WTC11 (cell line): ENCODE measurements at regions of chr1 and their contacts with region 1.

Region 1: DNA sequence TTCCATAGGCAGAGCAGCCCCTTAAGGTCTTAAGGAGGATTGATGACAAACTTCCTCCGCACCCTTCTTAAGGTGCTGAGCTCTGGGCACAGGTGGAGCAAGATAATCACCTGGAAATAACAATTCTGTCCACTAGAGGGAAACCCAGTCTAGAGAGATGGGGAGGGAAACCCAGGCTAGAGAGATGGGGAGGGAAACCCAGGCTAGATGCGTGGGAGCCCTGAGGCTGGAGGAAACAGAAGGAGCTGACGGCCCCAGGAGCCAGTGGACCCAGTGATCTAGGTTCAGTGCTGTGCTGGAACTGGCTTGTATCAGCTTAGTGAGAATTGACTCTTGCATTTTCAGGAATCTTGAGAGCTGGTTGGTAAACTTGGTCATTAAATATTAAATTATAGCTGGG is 17.8 kb upstream of the MYCL start:
- DNase-seq: peak; percentile 61
- ATAC-seq: peak; percentile 78
- H3K4me3 Mint-ChIP-seq: no peak overlapping the region
- H3K27ac Mint-ChIP-seq: no peak overlapping the region
- H3K4me1 Mint-ChIP-seq: peaks cover 30% of the 10 kb centered on the region
- H3K27me3 Mint-ChIP-seq: peaks cover 6% of the 10 kb centered on the region; the same call in 1 of the 2 replicates
- CTCF ChIP-seq: peak; percentile 54; the same call in 1 of the 2 replicates

Region 2: DNA sequence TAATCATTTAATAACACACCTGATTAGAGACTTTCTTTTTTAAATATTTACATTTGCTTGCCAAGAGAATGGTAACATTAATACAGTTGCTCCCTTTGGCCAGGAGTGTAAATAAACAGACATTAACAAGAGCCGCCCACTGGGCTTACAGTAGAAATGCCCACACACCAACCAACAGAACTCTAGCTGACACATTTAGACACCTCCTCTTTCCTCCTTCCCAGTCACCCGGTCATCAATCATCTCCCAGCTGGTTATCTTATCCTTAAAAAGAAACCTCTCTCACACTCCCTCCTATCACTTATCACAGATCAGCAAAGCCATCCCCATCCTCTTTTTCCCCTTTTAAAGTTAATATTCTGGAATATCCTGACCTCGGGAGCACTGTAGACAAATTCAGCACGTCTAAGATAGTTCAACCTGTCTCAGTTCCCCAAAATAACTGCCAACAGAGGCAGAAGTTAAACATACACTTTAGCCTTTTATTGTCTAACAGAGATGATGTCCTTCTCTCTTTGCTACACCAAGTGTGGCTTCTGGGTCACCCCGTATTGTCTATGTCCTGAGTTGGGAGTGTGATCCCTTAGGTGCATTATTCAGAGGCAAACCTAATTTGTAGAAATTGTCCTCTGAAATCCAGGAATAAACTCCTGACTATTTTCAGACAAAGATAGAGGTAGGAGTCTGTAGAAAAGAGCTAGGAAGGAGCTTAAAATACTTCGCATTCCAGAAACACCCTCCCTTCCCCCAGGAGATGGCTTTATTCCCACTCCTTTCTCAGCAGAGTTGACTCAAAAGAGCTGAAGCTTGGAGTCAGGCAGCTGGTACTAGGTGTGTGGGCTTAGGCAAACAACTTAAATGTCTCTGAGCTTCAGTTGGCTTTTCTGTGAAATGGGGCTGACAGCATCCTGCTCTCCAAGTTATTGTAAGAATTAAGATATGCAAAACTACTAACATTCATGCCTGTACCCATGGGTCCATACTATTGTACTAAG is 26.6 kb before region 1 on chr1:
- CTCF ChIA-PET with region 1: interaction called, 28 read pairs
- POLR2A ChIA-PET with region 1: no interaction called
- DNase-seq: peak; percentile 23
- ATAC-seq: peak; percentile 86
- H3K4me3 Mint-ChIP-seq: peak overlapping the region; percentile 40
- H3K27ac Mint-ChIP-seq: peak overlapping the region; percentile 96
- H3K4me1 Mint-ChIP-seq: peaks cover 59% of the 10 kb centered on the region
- H3K27me3 Mint-ChIP-seq: peaks cover 3% of the 10 kb centered on the region
- CTCF ChIP-seq: no peak

Region 3: DNA sequence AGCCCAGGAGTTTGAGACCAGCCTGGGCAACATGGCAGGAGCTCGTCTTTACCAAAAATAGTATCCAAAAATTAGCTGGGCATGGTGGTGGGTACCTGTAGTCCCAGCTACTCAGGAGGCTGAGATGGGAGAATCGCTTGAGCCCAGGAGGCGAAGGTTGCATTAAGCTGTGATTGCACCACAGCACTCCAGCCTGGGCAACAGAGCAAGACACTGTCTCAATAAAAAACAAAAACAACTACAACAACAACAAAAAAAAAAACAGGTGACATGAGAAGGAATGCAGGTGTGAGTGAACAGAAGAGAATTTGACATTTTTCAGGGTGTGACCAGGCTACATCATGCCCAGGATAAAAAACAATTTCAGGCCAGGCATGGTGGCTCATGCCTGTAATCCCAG is 13.5 kb after region 1 on chr1:
- CTCF ChIA-PET with region 1: interaction called, 23 read pairs
- POLR2A ChIA-PET with region 1: no interaction called
- DNase-seq: no peak
- ATAC-seq: no peak
- H3K4me3 Mint-ChIP-seq: no peak overlapping the region
- H3K27ac Mint-ChIP-seq: no peak overlapping the region
- H3K4me1 Mint-ChIP-seq: no peaks in the 10 kb centered on the region
- H3K27me3 Mint-ChIP-seq: no peaks in the 10 kb centered on the region
- CTCF ChIP-seq: no peak

Region 4: DNA sequence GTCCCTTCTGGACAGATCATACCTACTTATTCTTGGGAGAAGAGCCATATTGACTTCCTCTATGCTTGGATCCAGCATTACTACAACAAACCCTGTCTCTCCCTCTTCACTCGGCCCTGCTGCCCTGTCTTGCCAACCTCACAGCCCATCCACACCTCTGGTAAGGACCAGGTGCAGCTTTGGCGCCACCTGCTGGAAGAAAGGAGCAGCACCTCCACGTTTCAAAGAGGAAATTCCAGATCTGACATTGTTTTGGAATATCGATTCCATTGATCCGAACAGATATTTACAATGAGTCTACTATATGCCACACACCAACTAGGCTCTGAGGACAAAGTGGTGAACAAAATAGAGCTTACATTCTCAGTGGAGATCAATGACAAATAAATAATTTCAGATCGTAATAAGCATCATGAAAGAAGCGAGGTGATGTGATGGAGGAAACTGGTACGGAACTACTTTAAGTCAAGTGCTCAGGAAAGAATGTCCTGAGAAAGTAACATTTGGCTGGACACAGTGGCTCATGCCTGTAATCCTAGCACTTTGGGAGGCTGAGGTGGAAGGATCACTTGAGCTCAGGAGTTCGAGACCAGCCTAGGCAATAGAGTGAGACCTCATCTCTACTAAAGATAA is 54.1 kb after region 1 on chr1:
- CTCF ChIA-PET with region 1: interaction called, 144 read pairs
- POLR2A ChIA-PET with region 1: interaction called, 3 read pairs
- DNase-seq: peak; percentile 82
- ATAC-seq: peak; percentile 83
- H3K4me3 Mint-ChIP-seq: no peak overlapping the region
- H3K27ac Mint-ChIP-seq: peak overlapping the region; percentile 12
- H3K4me1 Mint-ChIP-seq: peaks cover 15% of the 10 kb centered on the region
- H3K27me3 Mint-ChIP-seq: no peaks in the 10 kb centered on the region; the same call in 1 of the 2 replicates
- CTCF ChIP-seq: peak; percentile 97

Region 5: DNA sequence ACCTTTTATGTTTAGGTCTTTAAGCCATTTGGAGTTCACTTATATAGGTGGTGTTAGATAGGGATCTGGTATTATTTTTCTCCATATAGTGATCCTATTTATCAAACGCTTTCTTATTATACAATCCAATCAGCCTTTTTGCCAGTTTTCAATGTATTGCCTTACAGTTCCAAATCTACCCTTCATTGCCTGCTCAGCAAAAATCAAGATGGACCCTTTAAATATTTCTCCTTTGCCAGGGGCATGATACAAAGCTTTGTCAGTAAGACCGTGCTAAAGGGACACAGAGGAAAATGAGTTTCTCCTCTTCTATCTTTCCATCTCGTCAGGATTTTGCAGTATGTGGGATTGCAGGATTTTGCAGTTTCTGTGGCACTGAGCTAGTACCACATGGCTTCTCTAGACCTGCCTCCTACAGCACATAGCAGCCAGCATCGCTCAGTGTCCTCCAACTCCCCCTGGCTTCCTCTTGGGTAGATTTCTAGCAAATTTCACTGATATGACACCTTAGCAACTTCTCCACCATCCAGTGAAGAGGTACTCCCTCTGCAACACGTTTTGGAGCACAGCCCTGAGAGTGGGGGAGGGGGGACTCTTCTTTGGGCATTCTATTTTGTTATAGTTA is 98.5 kb after region 1 on chr1:
- CTCF ChIA-PET with region 1: interaction called, 16 read pairs
- POLR2A ChIA-PET with region 1: no interaction called
- DNase-seq: no peak
- ATAC-seq: peak; percentile 85
- H3K4me3 Mint-ChIP-seq: no peak overlapping the region
- H3K27ac Mint-ChIP-seq: no peak overlapping the region
- H3K4me1 Mint-ChIP-seq: no peaks in the 10 kb centered on the region
- H3K27me3 Mint-ChIP-seq: no peaks in the 10 kb centered on the region
- CTCF ChIP-seq: no peak

Region 6: GRCh38 chr1:40040511-40041465 is 121.2 kb after region 1 on chr1 and contains the start of gene CAP1:
- CTCF ChIA-PET with region 1: interaction called, 15 read pairs
- POLR2A ChIA-PET with region 1: interaction called, 5 read pairs
- DNase-seq: peak; percentile 100
- ATAC-seq: peak; percentile 91
- H3K4me3 Mint-ChIP-seq: peak within 1 kb of the TSS; percentile 95
- H3K27ac Mint-ChIP-seq: peak within 1 kb of the TSS; percentile 97
- H3K4me1 Mint-ChIP-seq: peaks cover 32% of the 10 kb centered on the region
- H3K27me3 Mint-ChIP-seq: no peaks in the 10 kb centered on the region
- CTCF ChIP-seq: no peak
- total RNA-seq, gene CAP1: 258 to 304 TPM (median 277 TPM) in 3 replicates

Region 7: DNA sequence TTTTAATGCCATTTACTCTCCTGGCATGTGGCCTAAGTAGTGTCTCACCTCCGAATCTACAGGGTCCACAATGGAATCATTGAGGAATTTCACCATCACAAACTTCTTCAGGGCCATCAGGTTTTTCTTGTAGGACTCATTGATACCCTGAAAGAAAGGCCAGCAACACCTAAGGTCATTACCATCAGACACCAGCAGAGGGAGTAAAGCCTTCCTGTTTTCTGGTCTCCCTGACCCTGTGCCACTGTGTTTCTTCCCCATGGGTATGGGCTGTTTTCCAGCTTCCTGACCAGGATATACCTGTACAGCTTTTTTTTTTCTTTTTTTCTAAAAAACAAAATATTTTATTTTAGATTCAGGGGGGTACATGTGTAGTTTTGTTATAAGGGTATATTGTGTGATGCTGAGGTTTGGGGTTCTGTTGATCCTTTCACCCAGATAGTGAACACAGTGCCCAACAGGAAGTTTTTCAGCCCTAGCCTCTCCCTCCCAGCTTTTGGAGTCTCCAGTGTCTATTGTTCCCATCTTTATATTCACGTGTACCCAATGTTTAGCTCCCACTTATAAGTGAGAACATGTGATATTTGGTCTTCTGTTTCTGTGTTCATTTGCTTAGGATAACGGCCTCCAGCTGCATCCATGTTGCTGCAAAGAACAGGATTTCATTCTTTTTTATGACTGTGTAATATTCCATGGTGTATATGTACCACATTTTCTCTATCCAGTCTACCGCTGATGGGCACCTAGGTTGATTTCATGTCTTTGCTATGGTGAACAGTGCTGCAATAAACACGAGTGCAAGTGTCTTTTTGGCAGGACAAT is 159.2 kb after region 1 on chr1:
- CTCF ChIA-PET with region 1: no interaction called
- POLR2A ChIA-PET with region 1: no interaction called
- DNase-seq: peak; percentile 59
- ATAC-seq: peak; percentile 94
- H3K4me3 Mint-ChIP-seq: no peak overlapping the region
- H3K27ac Mint-ChIP-seq: no peak overlapping the region
- H3K4me1 Mint-ChIP-seq: no peaks in the 10 kb centered on the region
- H3K27me3 Mint-ChIP-seq: no peaks in the 10 kb centered on the region
- CTCF ChIP-seq: peak; percentile 45; the same call in 1 of the 2 replicates